ENCODE measurements at regions of chr1 and their contacts with region 1.

Region 1: DNA sequence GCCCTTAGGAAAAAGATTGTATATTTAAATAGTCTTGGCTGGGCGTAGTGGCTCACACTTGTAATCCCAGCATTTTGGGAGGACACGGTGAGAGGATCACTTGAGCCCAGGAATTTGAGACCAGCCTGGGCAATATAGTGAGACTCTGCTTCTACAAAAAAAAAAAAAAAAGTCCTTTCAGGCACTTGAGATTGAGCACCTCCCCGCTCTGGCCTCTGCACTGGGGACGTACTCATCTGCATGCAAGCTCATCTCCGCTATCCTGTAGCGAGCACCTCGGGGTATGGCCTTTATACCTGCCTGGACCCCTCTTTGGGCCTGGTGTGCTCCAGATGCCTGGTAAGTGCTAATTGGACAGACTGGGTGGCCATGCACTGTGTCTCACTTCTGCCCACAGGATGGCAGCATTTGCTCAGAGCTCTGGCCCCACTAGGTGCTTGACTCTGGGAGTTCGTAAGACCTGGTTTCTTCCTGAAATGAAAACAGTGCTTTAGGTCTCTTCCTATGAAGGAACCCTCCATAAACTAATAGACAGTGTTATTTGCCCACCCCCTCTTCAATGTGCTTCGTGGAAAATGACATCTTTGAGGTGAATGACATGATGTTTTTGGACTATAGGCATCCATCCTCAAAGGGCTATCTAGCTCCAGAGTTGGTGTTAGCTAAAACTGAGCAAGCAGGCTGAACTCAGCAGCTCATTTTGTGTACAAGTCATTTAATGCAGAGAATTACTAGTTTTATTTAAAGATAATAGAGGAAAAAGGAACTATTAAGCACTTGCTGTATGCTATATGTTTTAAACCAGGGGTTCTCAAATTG is 61.7 kb upstream of the ADAR start:
- DNase-seq: peak; percentile 87
- H3K4me3 Mint-ChIP-seq: no peak overlapping the region
- H3K27ac Mint-ChIP-seq: no peak overlapping the region
- H3K4me1 Mint-ChIP-seq: peaks cover 15% of the 10 kb centered on the region
- H3K27me3 Mint-ChIP-seq: no peaks in the 10 kb centered on the region

Region 2: GRCh38 chr1:154501423-154502065 is 168.1 kb before region 1 on chr1:
- CTCF ChIA-PET with region 1: no interaction called
- DNase-seq: no peak
- H3K4me3 Mint-ChIP-seq: peak overlapping the region; percentile 11
- H3K27ac Mint-ChIP-seq: no peak overlapping the region
- H3K4me1 Mint-ChIP-seq: peaks cover 14% of the 10 kb centered on the region
- H3K27me3 Mint-ChIP-seq: peaks cover 78% of the 10 kb centered on the region

Region 3: DNA sequence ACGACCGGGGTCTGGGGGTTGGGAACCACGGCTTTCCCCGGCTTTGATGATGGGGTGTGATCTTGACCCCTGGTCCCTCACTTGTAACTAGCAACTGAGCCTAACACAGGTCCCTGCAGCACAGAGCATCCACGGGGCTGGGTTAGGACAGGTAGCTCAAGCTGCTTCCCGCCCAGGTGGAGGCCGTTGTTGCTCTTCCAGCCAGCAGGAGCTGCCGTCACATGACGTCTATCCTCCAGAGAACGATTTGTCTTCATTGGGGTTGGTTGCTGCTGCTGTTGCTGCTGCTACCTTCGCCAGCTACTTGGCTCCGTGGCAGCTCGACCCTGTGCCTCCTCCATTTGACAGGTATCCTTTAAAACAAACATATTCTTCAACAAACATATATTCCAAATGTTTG is 12.6 kb after region 1 on chr1:
- CTCF ChIA-PET with region 1: interaction called, 13 read pairs
- DNase-seq: no peak
- H3K4me3 Mint-ChIP-seq: no peak overlapping the region
- H3K27ac Mint-ChIP-seq: no peak overlapping the region
- H3K4me1 Mint-ChIP-seq: no peaks in the 10 kb centered on the region
- H3K27me3 Mint-ChIP-seq: peaks cover 28% of the 10 kb centered on the region

Region 4: DNA sequence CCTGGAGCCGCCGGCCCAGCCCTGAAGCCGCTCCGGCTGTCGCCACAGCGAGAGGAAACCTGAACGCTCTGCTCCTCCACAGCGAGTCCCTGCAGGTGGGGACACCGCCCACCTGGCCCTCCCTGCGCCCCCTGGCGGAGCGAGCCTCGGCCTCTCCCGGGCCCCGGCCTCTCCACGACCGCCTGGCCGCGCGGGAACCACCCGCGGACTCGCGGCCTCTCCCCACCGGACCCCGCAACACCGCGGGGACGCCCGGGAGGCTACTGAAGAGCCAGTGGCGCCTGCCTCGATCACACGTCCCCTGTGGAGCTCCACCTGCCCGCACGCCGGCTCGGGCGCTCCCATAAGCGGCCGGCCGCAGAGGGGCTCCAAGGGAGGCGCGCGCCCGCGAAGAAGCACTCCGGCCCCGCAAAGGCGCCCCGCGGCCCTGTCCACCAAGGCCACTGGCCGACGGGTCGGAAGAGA is 90.8 kb after region 1 on chr1:
- CTCF ChIA-PET with region 1: interaction called, 31 read pairs
- DNase-seq: peak; percentile 89
- H3K4me3 Mint-ChIP-seq: peak overlapping the region; percentile 49
- H3K27ac Mint-ChIP-seq: peak overlapping the region; percentile 90
- H3K4me1 Mint-ChIP-seq: peaks cover 48% of the 10 kb centered on the region
- H3K27me3 Mint-ChIP-seq: peaks cover 12% of the 10 kb centered on the region

Region 5: DNA sequence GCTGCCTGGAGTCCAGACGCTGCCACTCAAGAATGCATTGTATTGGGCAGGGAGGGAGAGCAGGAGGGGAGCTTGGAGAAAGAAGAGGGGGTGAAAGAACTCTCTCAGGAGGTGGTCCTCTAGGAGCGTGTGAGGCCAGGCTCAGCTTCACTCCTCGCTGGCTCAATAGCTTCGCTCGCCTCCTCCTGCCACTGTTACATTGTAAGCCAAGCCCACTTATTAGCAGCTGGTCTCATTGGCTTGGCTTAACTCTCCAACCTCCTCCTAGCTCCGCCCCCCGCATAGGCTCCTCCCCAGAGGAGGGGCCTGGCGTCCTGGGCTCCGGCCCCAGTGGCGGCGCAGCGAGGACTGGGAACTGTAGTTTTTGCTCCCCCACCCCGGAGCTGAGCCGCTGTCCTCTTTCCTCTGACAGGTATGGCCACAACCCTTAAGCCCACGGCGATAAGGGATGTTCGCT is 200.5 kb after region 1 on chr1 and contains the start of gene KCNN3:
- CTCF ChIA-PET with region 1: interaction called, 20 read pairs
- DNase-seq: peak; percentile 83
- H3K4me3 Mint-ChIP-seq: no peak within 1 kb of the TSS
- H3K27ac Mint-ChIP-seq: no peak within 1 kb of the TSS
- H3K4me1 Mint-ChIP-seq: peaks cover 16% of the 10 kb centered on the region
- H3K27me3 Mint-ChIP-seq: peaks cover 66% of the 10 kb centered on the region

Region 6: DNA sequence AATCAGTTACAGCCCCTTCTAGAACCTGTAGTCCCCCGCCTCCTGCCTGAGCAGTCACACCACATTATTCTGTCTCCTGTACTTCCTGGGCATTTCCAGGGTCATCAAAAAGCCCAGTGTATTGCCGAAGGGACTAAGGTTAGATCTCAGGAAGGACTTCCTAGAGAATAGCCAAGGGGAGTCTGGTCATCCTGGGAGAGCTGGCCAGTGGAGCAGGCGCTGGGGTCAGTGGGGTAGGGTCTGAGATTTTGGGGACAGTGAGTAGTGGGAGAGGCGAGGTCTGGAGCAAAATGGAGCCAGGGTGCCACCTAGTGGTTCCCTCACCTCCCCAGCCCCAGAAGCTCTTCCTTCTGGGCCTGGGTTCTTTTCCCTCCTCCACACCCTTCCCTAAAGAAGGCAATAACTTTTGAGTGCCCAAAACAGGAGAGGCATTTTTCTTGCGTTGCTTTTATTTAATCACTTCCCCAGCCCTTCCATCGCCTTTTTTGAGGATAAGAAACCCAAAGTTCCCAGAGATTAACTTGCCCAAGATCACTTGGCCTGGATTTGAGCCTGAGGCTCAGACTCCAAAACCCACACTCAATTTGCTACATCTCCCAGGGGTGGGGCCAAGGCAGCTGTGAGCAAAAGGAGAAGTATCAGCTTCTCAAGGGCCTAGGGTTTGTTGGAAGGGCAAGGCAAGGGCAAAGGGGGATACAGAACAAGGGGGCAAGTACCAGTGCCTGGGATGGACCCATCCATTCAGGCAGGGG is 274.2 kb after region 1 on chr1:
- CTCF ChIA-PET with region 1: interaction called, 12 read pairs
- DNase-seq: peak; percentile 61
- H3K4me3 Mint-ChIP-seq: no peak overlapping the region
- H3K27ac Mint-ChIP-seq: peak overlapping the region; percentile 95
- H3K4me1 Mint-ChIP-seq: peaks cover 61% of the 10 kb centered on the region
- H3K27me3 Mint-ChIP-seq: no peaks in the 10 kb centered on the region

Measured in activated naive CD4-positive, alpha-beta T cell treated with anti-CD3 and anti-CD28 coated beads, Interleukin-2, amount 10 ng/mL, durations not matched to agents 7 days and 5 days (primary cell).